Heart right ventricle (tissue), 16 donors: ENCODE measurements at regions of chr4 and their contacts with region 1.

Region 1: GRCh38 chr4:19024047-19024446 is 1002.5 kb upstream of the LCORL start:
- DNase-seq: no peak
- ATAC-seq: no peak
- H3K4me3 ChIP-seq: no peak overlapping the region
- H3K27ac ChIP-seq: no peak overlapping the region
- H3K4me1 ChIP-seq: no peaks in the 10 kb centered on the region
- H3K27me3 ChIP-seq: no peaks in the 10 kb centered on the region
- CTCF ChIP-seq: no peak

Region 2: GRCh38 chr4:20017070-20017776 is 993.2 kb after region 1 on chr4:
- intact Hi-C with region 1: loop called in 1 of 10 experiments (anchors 5 kb)
- DNase-seq: no peak
- ATAC-seq: no peak
- H3K4me3 ChIP-seq: no peak overlapping the region
- H3K27ac ChIP-seq: no peak overlapping the region
- H3K4me1 ChIP-seq: no peaks in the 10 kb centered on the region
- H3K27me3 ChIP-seq: no peaks in the 10 kb centered on the region
- CTCF ChIP-seq: no peak